Lower leg skin (tissue), 4 donors: ENCODE measurements at regions of chr3 and their contacts with region 1.

Region 1: DNA sequence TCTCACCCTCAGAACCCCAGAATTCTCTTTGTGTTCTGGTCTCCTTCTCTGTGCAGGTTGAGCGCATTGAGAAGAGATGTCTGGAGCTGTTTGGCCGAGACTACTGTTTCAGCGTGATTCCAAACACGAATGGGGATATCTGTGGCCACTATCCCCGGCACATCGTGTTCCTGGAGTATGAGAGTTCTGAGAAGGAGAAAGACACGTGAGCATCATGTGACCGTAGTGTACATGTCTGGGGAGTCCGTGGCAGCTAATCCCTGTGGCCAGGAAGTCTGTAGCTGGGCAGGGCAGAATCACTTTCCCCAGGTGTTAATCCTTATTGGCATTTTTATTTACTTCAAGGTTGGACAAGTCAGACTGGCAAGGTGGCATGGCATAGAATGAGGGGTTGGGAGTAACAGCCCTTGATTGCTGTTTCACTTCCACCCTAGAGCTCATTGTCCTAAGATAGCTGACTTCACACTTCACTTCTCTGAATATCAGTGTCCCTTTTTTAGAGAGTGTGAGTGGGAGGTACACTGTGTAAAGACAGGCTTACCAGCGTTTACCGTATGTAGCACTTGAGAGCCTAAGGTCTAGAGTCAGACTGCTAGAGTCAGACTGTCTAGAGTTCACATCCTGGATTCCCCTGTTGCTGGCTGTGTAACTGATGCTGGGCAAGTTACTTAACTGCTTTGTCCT is 4.4 kb downstream of the MTMR14 start:
- DNase-seq: no peak
- H3K4me3 ChIP-seq: no peak overlapping the region
- CTCF ChIP-seq: no peak
- POLR2A ChIP-seq: no peak

Region 2: GRCh38 chr3:9582332-9582731 is 71.4 kb before region 1 on chr3:
- intact Hi-C with region 1: loop called (anchors 2 kb)
- DNase-seq: no peak
- H3K4me3 ChIP-seq: no peak overlapping the region
- CTCF ChIP-seq: no peak
- POLR2A ChIP-seq: no peak

Region 3: DNA sequence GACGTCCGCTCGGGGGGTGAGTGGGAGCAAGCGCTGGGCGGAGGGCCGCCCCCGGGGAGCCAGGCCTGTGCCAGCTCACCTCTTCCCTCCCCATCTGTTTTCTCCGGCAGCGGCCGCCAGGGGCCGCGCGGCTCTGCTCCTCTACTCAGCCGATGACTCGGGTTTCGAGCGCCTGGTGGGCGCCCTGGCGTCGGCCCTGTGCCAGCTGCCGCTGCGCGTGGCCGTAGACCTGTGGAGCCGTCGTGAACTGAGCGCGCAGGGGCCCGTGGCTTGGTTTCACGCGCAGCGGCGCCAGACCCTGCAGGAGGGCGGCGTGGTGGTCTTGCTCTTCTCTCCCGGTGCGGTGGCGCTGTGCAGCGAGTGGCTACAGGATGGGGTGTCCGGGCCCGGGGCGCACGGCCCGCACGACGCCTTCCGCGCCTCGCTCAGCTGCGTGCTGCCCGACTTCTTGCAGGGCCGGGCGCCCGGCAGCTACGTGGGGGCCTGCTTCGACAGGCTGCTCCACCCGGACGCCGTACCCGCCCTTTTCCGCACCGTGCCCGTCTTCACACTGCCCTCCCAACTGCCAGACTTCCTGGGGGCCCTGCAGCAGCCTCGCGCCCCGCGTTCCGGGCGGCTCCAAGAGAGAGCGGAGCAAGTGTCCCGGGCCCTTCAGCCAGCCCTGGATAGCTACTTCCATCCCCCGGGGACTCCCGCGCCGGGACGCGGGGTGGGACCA is 279.3 kb after region 1 on chr3:
- intact Hi-C with region 1: no loop called
- DNase-seq: peak; percentile 69 to 97
- H3K4me3 ChIP-seq: peak overlapping the region; percentile 41
- CTCF ChIP-seq: no peak
- POLR2A ChIP-seq: no peak